Right cardiac atrium (tissue), 5 donors: ENCODE measurements at regions of chr2 and their contacts with region 1.

Region 1: DNA sequence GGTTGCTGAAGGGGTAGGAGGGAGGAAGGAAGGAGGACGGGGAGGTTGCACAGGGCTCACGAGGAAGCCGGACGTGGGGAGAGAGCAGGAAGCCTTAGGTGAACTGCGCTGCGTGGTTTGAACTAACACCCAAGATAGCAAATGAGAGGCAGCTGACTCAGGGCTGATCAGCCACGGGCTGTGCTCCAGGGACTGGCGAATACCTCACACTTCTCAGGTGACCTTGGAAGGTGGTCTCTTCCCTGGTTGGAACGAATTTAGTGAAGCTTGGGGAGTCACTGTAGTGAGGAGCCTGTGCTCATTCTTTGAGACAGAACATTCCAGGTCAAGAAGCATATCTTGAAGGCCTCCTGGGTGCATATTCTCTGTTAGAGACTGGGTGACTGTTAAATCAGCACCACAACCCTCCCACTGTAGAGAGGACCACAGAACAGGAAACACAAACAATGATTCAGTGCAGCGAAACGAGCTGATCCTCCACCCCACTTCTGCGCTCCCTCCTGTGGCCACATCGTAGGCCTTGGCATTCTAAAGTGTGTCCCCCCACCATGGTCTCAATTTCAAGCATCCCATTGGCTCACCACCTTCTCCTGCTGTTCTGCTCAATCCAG is 33.8 kb downstream of the TOGARAM2 start:
- DNase-seq: peak; percentile 63 to 87 (median 82)
- ATAC-seq: peak; percentile 41 to 52
- H3K4me3 ChIP-seq: peak overlapping the region; percentile 27
- H3K27ac ChIP-seq: peak overlapping the region; percentile 97
- H3K4me1 ChIP-seq: peaks cover 23% of the 10 kb centered on the region
- H3K27me3 ChIP-seq: no peaks in the 10 kb centered on the region

Region 2: GRCh38 chr2:28915939-28916338 is 99.0 kb before region 1 on chr2:
- intact Hi-C with region 1: no loop called
- DNase-seq: no peak
- ATAC-seq: no peak
- H3K4me3 ChIP-seq: no peak overlapping the region
- H3K27ac ChIP-seq: no peak overlapping the region
- H3K4me1 ChIP-seq: no peaks in the 10 kb centered on the region
- H3K27me3 ChIP-seq: no peaks in the 10 kb centered on the region

Region 3: GRCh38 chr2:28972778-28973340 is 42.1 kb before region 1 on chr2:
- intact Hi-C with region 1: loop called in 1 of 4 experiments (anchors 5 kb)
- DNase-seq: no peak
- ATAC-seq: no peak
- H3K4me3 ChIP-seq: no peak overlapping the region
- H3K27ac ChIP-seq: no peak overlapping the region
- H3K4me1 ChIP-seq: peaks cover 2% of the 10 kb centered on the region
- H3K27me3 ChIP-seq: no peaks in the 10 kb centered on the region

Region 4: GRCh38 chr2:29115797-29116781 is 101.2 kb after region 1 on chr2:
- intact Hi-C with region 1: loop called in 2 of 4 experiments (anchors 10 kb)
- DNase-seq: peak; percentile 61 to 89 (median 77)
- ATAC-seq: peak; percentile 27 to 30
- H3K4me3 ChIP-seq: peak overlapping the region; percentile 74
- H3K27ac ChIP-seq: peak overlapping the region; percentile 59
- H3K4me1 ChIP-seq: peaks cover 2% of the 10 kb centered on the region
- H3K27me3 ChIP-seq: no peaks in the 10 kb centered on the region